ENCODE measurements at regions of chr18 and their contacts with region 1.

Region 1: DNA sequence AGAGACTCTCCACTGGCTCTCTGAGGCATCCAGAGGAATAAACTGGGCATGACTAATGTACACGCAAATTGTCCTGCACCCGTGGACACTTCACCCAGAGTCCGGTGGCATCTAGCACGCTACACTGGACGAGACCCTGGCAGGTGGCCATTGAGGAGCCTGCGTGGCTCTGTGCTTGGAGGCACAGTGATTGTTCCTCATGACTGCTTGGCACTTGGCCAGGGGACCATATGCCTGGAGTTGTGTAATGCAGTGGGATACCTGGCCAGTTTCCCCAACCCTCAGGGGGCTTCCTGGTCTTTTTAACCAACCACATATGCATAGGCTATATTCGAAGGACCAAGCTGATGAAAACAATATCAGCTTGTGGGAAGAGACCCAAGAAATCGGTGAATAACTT is 66.6 kb downstream of the MTCL1 start:
- DNase-seq: peak in 1 of 2 donors; percentile 25
- H3K4me3 ChIP-seq: no peak overlapping the region
- H3K27ac ChIP-seq: no peak overlapping the region
- H3K4me1 ChIP-seq: peaks cover 0 to 4% of the 10 kb centered on the region in 2 donors
- H3K27me3 ChIP-seq: no peaks in the 10 kb centered on the region
- CTCF ChIP-seq: no peak
- POLR2A ChIP-seq: no peak

Region 2: GRCh38 chr18:8493141-8493540 is 278.8 kb before region 1 on chr18:
- intact Hi-C with region 1: no loop called
- DNase-seq: peak in 1 of 2 donors; percentile 27
- H3K4me3 ChIP-seq: no peak overlapping the region
- H3K27ac ChIP-seq: no peak overlapping the region
- H3K4me1 ChIP-seq: no peaks in the 10 kb centered on the region
- H3K27me3 ChIP-seq: no peaks in the 10 kb centered on the region
- CTCF ChIP-seq: no peak
- POLR2A ChIP-seq: no peak

Region 3: GRCh38 chr18:8799596-8800441 is 27.9 kb after region 1 on chr18:
- intact Hi-C with region 1: loop called (anchors 1 kb)
- DNase-seq: no peak
- H3K4me3 ChIP-seq: no peak overlapping the region
- H3K27ac ChIP-seq: peak overlapping the region in 1 of 2 donors; percentile 43
- H3K4me1 ChIP-seq: no peaks in the 10 kb centered on the region
- H3K27me3 ChIP-seq: no peaks in the 10 kb centered on the region
- CTCF ChIP-seq: no peak
- POLR2A ChIP-seq: no peak

Region 4: GRCh38 chr18:9290156-9290555 is 518.2 kb after region 1 on chr18:
- intact Hi-C with region 1: no loop called
- DNase-seq: no peak
- H3K4me3 ChIP-seq: no peak overlapping the region
- H3K27ac ChIP-seq: no peak overlapping the region
- H3K4me1 ChIP-seq: no peaks in the 10 kb centered on the region
- H3K27me3 ChIP-seq: no peaks in the 10 kb centered on the region
- CTCF ChIP-seq: no peak
- POLR2A ChIP-seq: no peak

Measured in breast epithelium (tissue), 4 donors.